Right ventricle myocardium superior (tissue), 1 donor: ENCODE measurements at regions of chr19 and their contacts with region 1.

Region 1: DNA sequence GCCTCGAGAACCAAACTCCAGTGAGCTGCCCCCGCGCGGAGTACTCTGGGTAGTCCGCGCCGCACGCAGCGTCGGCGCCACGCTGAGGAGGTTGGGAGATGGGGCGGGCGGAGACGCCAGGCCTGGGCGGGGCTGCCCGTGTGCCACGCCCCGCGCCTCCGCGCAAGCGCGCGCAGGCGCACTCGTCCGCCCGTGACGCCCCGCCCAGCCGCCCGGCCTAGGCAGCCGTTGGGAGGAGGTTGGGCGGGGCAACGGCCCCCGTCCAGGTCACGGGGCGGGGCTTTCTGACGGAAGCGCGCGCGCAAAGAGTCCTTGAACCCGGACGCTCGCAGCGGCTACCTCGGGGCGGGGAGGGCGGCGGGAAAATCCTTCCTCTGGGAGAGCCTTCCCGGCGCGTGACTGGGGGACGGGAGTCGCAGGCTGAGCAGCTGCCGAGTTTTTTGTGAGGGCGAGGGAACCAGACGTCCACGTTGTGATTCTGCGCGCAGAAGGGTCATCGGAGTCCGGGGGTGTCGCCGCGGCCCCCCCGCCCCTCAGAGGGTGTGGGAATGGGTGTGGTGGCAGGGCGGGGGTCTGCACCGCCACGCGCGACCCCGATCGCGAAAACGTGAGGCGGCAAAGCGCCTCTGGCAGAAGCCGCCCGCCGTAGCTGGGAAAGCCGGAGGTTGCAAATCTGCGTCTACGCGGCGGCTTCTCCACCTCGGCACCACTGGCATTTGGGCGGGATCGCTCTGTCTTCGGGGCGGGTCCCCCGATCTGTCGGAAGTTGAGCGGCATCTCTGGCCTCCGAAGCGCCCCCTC is at the start of gene MED26:
- DNase-seq: peak; percentile 98
- ATAC-seq: peak; percentile 96
- total RNA-seq, gene MED26: 3.9 TPM

Region 2: DNA sequence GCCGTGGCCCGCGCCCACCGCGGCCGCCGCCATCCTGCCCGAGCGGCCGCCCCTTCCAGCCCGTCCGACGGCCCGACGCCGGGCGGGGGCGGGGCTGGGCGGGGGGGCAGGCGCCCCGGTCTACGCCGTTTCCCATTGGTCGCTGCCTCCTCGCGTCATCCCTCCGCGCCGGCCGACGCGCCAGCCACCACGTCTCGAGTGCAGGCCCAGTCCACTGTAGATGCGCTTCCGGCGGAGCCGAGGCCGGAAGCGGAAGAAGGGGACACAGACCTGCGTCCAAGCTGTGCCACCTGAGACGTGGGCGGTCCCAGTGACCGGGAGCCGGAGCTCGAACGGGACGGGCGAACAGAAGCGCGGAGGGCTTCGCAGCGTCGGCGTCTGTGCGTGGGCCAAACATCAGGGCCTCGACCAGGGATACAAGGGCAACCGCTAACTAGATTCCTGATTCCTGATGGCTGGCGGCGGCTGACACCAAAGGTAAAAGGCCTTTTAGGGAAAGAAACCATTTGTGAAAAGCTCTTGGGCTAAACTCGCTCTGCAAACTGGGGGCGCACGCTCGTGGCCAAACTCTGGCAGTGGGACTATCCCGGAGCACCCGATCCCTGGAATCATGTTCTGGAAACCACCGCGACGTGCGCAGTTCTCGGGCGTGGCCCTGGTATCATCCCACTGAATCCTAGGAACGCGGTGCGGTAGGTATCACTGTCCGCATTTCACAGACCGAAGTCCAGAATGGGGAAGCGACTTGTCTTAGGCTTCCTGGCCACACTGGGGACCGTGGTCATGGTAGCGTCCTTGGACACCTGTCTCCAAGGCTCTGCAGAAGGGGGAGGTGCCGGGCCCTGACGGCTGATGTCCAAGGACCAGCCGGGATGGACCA is 55.8 kb before region 1 on chr19 and contains the start of gene SLC35E1:
- intact Hi-C with region 1: loop called (anchors 10 kb)
- DNase-seq: peak; percentile 97
- ATAC-seq: peak; percentile 98
- total RNA-seq, gene SLC35E1: 20.8 TPM